Calu3 (cell line): ENCODE measurements at regions of chr3 and their contacts with region 1.

Region 1: GRCh38 chr3:42036483-42036823 is 54.7 kb upstream of the TRAK1 start:
- DNase-seq: no peak
- H3K4me3 Mint-ChIP-seq: peak overlapping the region; percentile 20
- H3K27ac Mint-ChIP-seq: peak overlapping the region; percentile 57
- H3K4me1 Mint-ChIP-seq: peaks cover 36% of the 10 kb centered on the region
- H3K27me3 Mint-ChIP-seq: no peaks in the 10 kb centered on the region
- CTCF ChIP-seq: no peak

Region 2: GRCh38 chr3:42071904-42072592 is 35.6 kb after region 1 on chr3:
- CTCF ChIA-PET with region 1: interaction called, 12 read pairs
- intact Hi-C with region 1: no loop called
- DNase-seq: no peak
- H3K4me3 Mint-ChIP-seq: no peak overlapping the region
- H3K27ac Mint-ChIP-seq: no peak overlapping the region
- H3K4me1 Mint-ChIP-seq: peaks cover 16% of the 10 kb centered on the region
- H3K27me3 Mint-ChIP-seq: no peaks in the 10 kb centered on the region
- CTCF ChIP-seq: no peak